Endothelial cell of umbilical vein (primary cell): ENCODE measurements at regions of chr5 and their contacts with region 1.

Region 1: GRCh38 chr5:95781101-95781583 is 41.4 kb downstream of the GLRX start:
- DNase-seq: peak; percentile 84
- H3K4me3 ChIP-seq: no peak overlapping the region
- H3K27ac ChIP-seq: no peak overlapping the region
- H3K4me1 ChIP-seq: peaks cover 11% of the 10 kb centered on the region
- H3K27me3 ChIP-seq: no peaks in the 10 kb centered on the region
- CTCF ChIP-seq: peak; percentile 85 to 94
- POLR2A ChIP-seq: no peak

Region 2: DNA sequence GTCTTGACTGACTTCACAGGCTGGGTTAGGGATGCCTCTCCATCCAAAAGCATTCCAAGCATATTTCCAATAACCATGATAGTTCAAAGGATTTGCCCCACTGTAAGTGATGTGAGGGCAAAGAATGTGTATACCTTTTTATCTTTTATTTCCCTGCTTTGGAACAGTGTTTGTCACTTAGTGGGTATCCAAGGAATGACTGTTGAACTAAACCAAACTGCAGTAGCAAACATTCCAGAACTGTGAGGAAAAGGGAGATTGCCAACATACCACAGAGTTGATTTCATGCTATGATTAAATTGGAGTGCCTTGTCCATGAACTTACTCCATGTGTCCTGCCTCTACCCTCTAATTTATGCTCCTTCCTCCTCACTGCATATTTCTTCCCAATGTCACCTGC is 1562.8 kb before region 1 on chr5:
- CTCF ChIA-PET with region 1: no interaction called
- POLR2A ChIA-PET with region 1: no interaction called
- dilution Hi-C with region 1: no loop called
- intact Hi-C with region 1: no loop called
- DNase-seq: no peak
- H3K4me3 ChIP-seq: no peak overlapping the region
- H3K27ac ChIP-seq: no peak overlapping the region
- H3K4me1 ChIP-seq: no peaks in the 10 kb centered on the region
- H3K27me3 ChIP-seq: peaks cover 0 to 2% of the 10 kb centered on the region in 2 experiments
- CTCF ChIP-seq: no peak
- POLR2A ChIP-seq: no peak

Region 3: GRCh38 chr5:95646554-95647431 is 134.3 kb before region 1 on chr5 and contains the start of gene RFESD:
- CTCF ChIA-PET with region 1: interaction called, 37 read pairs
- POLR2A ChIA-PET with region 1: no interaction called
- dilution Hi-C with region 1: no loop called
- intact Hi-C with region 1: loop called (anchors 1 kb)
- DNase-seq: peak; percentile 89
- H3K4me3 ChIP-seq: peak within 1 kb of the TSS; percentile 61 to 75 (median 67)
- H3K27ac ChIP-seq: peak within 1 kb of the TSS; percentile 91
- H3K4me1 ChIP-seq: peaks cover 9% of the 10 kb centered on the region
- H3K27me3 ChIP-seq: no peaks in the 10 kb centered on the region
- CTCF ChIP-seq: peak in 1 of 2 donors; percentile 2
- POLR2A ChIP-seq: peak; percentile 86
- total RNA-seq, gene RFESD: 1.1 and 2.0 TPM in 2 replicates

Region 4: DNA sequence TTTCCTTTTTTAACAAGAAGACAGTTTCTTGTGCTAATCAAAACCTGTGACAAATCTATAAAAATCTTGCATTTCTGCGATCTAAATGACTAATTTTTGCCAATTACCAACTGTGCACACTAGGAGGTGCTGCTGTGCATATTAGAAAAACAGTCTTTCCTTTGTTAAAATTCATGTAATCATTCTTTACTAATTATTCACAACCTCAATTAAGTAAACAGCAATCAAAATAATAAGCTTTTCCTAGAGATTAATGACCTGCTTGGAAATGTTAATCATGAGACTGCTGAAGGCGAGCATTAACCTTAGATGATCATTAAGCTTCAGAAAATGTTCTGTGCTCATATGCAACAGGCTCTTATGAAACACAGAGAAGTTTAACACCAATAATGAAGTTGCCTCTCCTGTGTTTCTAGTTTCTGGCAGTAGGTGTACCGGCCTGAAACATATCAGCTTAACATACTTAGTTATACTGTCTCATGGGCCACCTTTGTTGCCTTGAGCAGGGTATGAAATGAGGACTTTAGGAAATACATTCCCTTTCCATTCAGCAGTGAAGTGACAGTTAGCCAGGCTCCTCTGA is 116.8 kb before region 1 on chr5:
- CTCF ChIA-PET with region 1: interaction called, 56 read pairs
- POLR2A ChIA-PET with region 1: no interaction called
- dilution Hi-C with region 1: no loop called
- intact Hi-C with region 1: loop called (anchors 1 kb)
- DNase-seq: peak; percentile 74
- H3K4me3 ChIP-seq: no peak overlapping the region
- H3K27ac ChIP-seq: no peak overlapping the region
- H3K4me1 ChIP-seq: peaks cover 15% of the 10 kb centered on the region
- H3K27me3 ChIP-seq: no peaks in the 10 kb centered on the region
- CTCF ChIP-seq: peak; percentile 54 to 60
- POLR2A ChIP-seq: no peak

Region 5: GRCh38 chr5:95730730-95731570 is 50.2 kb before region 1 on chr5 and contains the start of gene RHOBTB3:
- CTCF ChIA-PET with region 1: interaction called, 41 read pairs
- POLR2A ChIA-PET with region 1: no interaction called
- dilution Hi-C with region 1: no loop called
- intact Hi-C with region 1: loop called (anchors 2 kb)
- DNase-seq: peak; percentile 88
- H3K4me3 ChIP-seq: peak within 1 kb of the TSS; percentile 35 to 95 (median 74)
- H3K27ac ChIP-seq: peak within 1 kb of the TSS; percentile 56
- H3K4me1 ChIP-seq: peaks cover 47% of the 10 kb centered on the region
- H3K27me3 ChIP-seq: no peaks in the 10 kb centered on the region
- CTCF ChIP-seq: peak in 1 of 2 donors; percentile 1
- POLR2A ChIP-seq: peak; percentile 39
- total RNA-seq, gene RHOBTB3: 37.6 and 44.1 TPM in 2 replicates

Region 6: DNA sequence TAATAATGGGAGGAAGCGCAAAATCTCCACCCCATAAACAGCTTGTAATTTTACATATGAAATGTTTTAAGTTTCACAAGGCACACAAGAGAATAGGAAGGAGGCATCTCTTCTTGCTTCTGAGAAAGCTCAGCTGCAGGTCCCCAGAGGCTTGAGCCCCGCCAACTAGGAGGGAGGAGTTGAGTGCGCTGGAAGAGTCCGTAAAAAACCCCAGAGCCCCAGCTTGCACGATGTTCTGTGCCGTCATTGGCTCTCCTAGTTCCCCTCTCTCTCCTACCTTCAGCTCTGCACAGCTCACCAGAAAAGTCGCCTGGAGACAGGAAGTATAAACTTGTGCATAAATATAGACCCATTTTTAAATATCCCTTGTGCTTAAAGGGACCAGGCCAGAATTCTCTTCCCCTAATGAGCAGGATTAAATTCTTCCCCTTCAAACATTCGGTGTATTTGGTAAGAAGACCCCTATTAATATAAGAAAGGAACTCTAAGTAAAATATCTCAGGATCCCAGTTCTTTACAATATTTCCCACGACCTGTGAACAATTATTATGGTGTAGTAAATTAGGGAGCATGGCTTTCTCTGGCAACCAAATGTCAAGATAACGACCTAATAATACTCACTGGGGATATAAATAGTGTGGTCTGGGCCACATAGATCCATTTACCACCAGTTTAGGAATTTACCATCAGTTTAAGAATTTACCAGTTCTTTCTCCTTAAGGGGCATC is 27.7 kb after region 1 on chr5:
- CTCF ChIA-PET with region 1: interaction called, 10 read pairs
- POLR2A ChIA-PET with region 1: no interaction called
- dilution Hi-C with region 1: no loop called
- intact Hi-C with region 1: no loop called
- DNase-seq: no peak
- H3K4me3 ChIP-seq: no peak overlapping the region
- H3K27ac ChIP-seq: no peak overlapping the region
- H3K4me1 ChIP-seq: no peaks in the 10 kb centered on the region
- H3K27me3 ChIP-seq: no peaks in the 10 kb centered on the region
- CTCF ChIP-seq: no peak
- POLR2A ChIP-seq: no peak

Region 7: GRCh38 chr5:95822542-95823181 is 41.5 kb after region 1 on chr5 and contains the start of gene GLRX:
- CTCF ChIA-PET with region 1: interaction called, 55 read pairs
- POLR2A ChIA-PET with region 1: no interaction called
- dilution Hi-C with region 1: no loop called
- intact Hi-C with region 1: no loop called
- DNase-seq: peak; percentile 82
- H3K4me3 ChIP-seq: peak within 1 kb of the TSS; percentile 63 to 80 (median 69)
- H3K27ac ChIP-seq: peak within 1 kb of the TSS; percentile 54
- H3K4me1 ChIP-seq: peaks cover 26% of the 10 kb centered on the region
- H3K27me3 ChIP-seq: no peaks in the 10 kb centered on the region
- CTCF ChIP-seq: no peak
- POLR2A ChIP-seq: peak; percentile 42
- total RNA-seq, gene GLRX: 13.3 and 14.2 TPM in 2 replicates

Region 8: GRCh38 chr5:95846554-95847260 is 65.6 kb after region 1 on chr5:
- CTCF ChIA-PET with region 1: interaction called, 201 read pairs
- POLR2A ChIA-PET with region 1: no interaction called
- dilution Hi-C with region 1: no loop called
- intact Hi-C with region 1: loop called (anchors 1 kb)
- DNase-seq: peak; percentile 79
- H3K4me3 ChIP-seq: no peak overlapping the region
- H3K27ac ChIP-seq: no peak overlapping the region
- H3K4me1 ChIP-seq: no peaks in the 10 kb centered on the region
- H3K27me3 ChIP-seq: no peaks in the 10 kb centered on the region
- CTCF ChIP-seq: peak; percentile 80 to 88
- POLR2A ChIP-seq: no peak